PC-3 (cell line): ENCODE measurements at regions of chr1 and their contacts with region 1.

Region 1: GRCh38 chr1:58515794-58516401 is 30.6 kb downstream of the OMA1 start:
- DNase-seq: peak; percentile 81
- ATAC-seq: peak; percentile 63; the same call in 1 of the 2 replicates
- H3K4me3 ChIP-seq: no peak overlapping the region
- H3K27ac ChIP-seq: no peak overlapping the region
- H3K4me1 ChIP-seq: no peaks in the 10 kb centered on the region
- H3K27me3 ChIP-seq: no peaks in the 10 kb centered on the region
- CTCF ChIP-seq: peak; percentile 82

Region 2: DNA sequence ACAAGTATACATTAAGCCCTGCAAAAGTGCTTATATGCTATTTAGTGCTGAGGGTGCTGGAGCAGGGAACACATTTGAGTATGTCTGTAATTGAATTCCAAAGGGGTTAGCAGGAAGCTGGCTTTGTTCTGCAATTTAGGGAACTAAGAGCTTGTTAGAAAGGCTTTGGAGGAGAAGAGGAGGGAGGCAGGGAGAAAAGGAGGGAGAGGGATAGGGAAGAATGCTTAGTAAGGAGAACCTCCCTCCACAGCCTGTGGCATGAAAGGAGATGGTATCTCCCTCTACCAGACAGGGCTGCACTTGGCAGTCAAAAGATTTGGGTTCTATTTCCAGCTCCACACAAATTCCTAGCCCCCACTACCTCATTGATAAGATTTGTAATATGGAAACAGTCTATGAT is 1309.9 kb before region 1 on chr1:
- CTCF ChIA-PET with region 1: no interaction called
- POLR2A ChIA-PET with region 1: no interaction called
- intact Hi-C with region 1: no loop called
- DNase-seq: no peak
- ATAC-seq: no peak
- H3K4me3 ChIP-seq: no peak overlapping the region
- H3K27ac ChIP-seq: no peak overlapping the region
- H3K4me1 ChIP-seq: no peaks in the 10 kb centered on the region
- H3K27me3 ChIP-seq: no peaks in the 10 kb centered on the region
- CTCF ChIP-seq: no peak

Region 3: DNA sequence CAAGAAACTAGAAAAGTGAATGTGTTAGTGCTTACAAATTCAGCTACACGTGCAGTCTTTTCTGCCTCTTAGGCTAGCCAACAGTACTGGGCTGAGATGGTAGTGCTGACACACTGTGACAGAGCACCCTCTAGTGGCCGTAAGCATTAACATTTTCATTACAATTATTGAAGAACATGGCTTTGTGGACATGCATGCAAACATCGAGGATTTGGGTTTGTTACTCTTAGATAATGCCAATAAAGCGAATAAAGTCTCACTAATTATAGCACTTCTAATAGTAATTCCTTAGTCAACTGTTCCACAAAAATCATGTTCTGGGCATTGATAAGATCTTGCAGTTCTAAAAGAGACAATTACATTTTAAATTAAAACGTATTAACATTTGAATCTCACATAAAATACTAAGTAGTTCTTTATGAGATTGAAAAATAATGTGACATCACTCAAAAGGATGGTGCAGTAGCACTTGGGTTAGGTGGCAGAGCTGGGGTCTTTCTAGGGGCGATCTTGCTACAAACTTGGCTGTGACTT is 136.8 kb after region 1 on chr1:
- CTCF ChIA-PET with region 1: interaction called, 15 read pairs
- POLR2A ChIA-PET with region 1: no interaction called
- intact Hi-C with region 1: loop called (anchors 1 kb)
- DNase-seq: peak; percentile 84
- ATAC-seq: peak; percentile 84
- H3K4me3 ChIP-seq: no peak overlapping the region
- H3K27ac ChIP-seq: no peak overlapping the region
- H3K4me1 ChIP-seq: peaks cover 10% of the 10 kb centered on the region
- H3K27me3 ChIP-seq: no peaks in the 10 kb centered on the region
- CTCF ChIP-seq: peak; percentile 93